PC-9 (cell line): ENCODE measurements at regions of chr6 and their contacts with region 1.

Region 1: DNA sequence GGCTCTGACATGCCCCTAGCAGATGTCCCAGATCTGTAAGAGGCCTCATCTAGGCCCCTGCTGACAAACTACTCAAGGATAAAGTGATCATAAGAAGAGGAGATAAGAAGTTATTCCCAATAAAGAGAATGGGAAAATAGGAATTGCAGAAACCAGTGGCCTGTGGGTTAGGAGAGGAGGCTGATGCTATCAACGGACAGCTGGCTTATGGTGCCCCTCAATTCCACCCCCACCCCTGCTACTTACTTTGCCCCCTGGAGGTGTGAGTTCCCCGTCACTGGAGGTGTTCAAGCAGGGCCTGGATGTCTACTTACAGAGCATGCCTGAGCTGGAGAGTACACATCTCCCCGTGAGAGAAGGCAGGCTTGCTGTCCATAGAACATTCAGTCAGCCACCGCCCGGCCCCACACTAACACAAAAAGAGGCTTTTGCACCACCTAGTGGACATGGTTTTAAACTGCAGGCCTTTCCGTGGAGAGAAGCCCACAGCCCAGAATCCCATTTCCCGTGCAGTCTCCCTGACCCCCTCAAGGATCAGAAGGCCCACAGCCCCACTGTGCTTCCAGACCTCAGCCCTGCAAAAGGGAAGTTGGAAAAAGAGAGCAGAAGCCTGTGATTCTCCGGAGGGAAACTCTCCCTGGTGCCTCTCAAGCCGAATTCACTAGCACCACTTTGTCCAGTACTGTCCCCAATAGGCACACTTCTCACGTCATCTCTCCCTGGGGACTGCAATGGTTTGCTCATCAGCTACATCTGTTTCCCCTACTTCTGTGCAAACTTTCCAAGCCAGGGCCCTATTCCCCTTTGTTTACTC is 23.8 kb upstream of the BNIP5 start:
- DNase-seq: peak; percentile 43 to 70
- H3K4me3 ChIP-seq: no peak overlapping the region
- H3K27ac ChIP-seq: no peak overlapping the region
- H3K4me1 ChIP-seq: 0 out of 2 replicates have a peak, but pooled peaks cover 7% of the 10 kb centered on the region
- H3K27me3 ChIP-seq: no peaks in the 10 kb centered on the region
- CTCF ChIP-seq: peak; percentile 90

Region 2: GRCh38 chr6:36123257-36124139 is 236.9 kb before region 1 on chr6:
- CTCF ChIA-PET with region 1: no interaction called
- POLR2A ChIA-PET with region 1: no interaction called
- intact Hi-C with region 1: loop called (anchors 2 kb)
- DNase-seq: peak; percentile 48 to 75
- H3K4me3 ChIP-seq: no peak overlapping the region
- H3K27ac ChIP-seq: no peak overlapping the region
- H3K4me1 ChIP-seq: peaks cover 84% of the 10 kb centered on the region
- H3K27me3 ChIP-seq: no peaks in the 10 kb centered on the region
- CTCF ChIP-seq: peak; percentile 77

Region 3: DNA sequence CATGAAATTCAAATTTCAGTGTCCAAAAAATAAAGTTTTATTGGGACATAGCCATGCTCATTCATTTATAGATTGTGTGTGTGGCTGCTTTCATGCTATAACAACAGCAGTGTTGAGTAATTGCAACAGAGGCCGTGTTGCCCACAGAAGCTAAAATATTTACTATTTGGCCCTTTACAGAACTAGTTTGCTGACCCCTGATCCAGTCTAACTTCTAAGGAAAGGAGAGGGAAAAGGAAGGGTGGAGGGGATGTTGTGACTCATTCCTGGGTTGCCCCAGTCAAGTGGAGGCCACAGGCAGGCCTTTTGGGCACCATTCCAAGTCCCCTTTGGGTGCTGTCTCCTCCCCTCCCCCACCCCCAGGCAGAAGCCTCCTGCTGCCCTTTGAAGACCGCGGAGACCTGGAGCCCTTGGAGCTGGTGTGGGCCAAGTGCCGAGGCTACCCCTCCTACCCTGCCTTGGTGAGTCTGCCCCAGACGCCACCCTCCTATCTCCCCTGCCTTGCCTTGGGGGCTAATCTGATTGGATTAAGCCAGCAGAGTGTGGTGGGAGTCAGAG is 135.5 kb before region 1 on chr6:
- CTCF ChIA-PET with region 1: no interaction called
- POLR2A ChIA-PET with region 1: no interaction called
- intact Hi-C with region 1: loop called (anchors 10 kb)
- DNase-seq: peak; percentile 43 to 84
- H3K4me3 ChIP-seq: peak overlapping the region; percentile 15; the same call in 1 of the 2 replicates
- H3K27ac ChIP-seq: peak overlapping the region; percentile 52
- H3K4me1 ChIP-seq: peaks cover 57% of the 10 kb centered on the region
- H3K27me3 ChIP-seq: no peaks in the 10 kb centered on the region
- CTCF ChIP-seq: no peak

Region 4: DNA sequence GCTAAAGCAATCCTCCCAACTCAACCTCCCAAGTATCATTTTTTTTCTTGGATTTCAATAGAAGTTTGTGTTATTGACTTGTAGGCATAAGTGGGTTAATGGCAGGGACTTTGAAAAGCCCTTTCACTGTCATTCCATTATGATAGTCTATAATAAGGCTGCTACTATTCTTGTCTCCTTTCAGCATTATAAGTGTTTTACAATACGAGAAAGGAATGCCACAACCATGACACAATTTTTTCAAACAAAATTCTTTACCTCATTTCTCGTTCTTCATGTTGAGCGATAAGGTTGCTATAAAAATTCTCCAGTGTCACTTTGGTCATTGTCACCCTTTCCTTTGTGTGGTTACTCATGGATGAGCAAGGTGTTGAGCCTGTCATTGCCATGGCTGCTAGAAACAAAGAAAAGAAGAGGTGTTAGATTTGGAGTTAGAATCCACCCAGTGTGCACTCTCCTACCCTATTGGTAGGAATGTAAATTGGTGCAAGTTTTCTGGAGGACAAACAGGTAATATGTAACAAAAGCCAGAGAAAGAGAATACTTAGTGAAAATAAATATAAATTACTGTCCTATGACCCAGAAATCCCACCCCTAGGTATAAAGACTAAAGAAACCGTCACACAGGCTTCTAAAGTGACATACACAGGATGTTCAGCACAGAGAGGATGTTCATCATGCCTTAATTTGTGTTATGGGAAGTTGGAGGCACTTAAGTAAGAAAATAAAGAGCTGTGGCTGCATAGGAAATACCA is 179.5 kb after region 1 on chr6:
- CTCF ChIA-PET with region 1: no interaction called
- POLR2A ChIA-PET with region 1: no interaction called
- intact Hi-C with region 1: no loop called
- DNase-seq: no peak
- H3K4me3 ChIP-seq: no peak overlapping the region
- H3K27ac ChIP-seq: no peak overlapping the region
- H3K4me1 ChIP-seq: peaks cover 20% of the 10 kb centered on the region
- H3K27me3 ChIP-seq: no peaks in the 10 kb centered on the region
- CTCF ChIP-seq: no peak

Region 5: GRCh38 chr6:36576561-36576960 is 216.1 kb after region 1 on chr6:
- CTCF ChIA-PET with region 1: no interaction called
- POLR2A ChIA-PET with region 1: no interaction called
- intact Hi-C with region 1: no loop called
- DNase-seq: no peak
- H3K4me3 ChIP-seq: no peak overlapping the region
- H3K27ac ChIP-seq: peak overlapping the region; percentile 73
- H3K4me1 ChIP-seq: peaks cover 63% of the 10 kb centered on the region
- H3K27me3 ChIP-seq: no peaks in the 10 kb centered on the region
- CTCF ChIP-seq: no peak